Activated CD4-positive, alpha-beta memory T cell treated with anti-CD3 and anti-CD28 coated beads for 36 hours (primary cell): ENCODE measurements at regions of chr1 and their contacts with region 1.

Region 1: DNA sequence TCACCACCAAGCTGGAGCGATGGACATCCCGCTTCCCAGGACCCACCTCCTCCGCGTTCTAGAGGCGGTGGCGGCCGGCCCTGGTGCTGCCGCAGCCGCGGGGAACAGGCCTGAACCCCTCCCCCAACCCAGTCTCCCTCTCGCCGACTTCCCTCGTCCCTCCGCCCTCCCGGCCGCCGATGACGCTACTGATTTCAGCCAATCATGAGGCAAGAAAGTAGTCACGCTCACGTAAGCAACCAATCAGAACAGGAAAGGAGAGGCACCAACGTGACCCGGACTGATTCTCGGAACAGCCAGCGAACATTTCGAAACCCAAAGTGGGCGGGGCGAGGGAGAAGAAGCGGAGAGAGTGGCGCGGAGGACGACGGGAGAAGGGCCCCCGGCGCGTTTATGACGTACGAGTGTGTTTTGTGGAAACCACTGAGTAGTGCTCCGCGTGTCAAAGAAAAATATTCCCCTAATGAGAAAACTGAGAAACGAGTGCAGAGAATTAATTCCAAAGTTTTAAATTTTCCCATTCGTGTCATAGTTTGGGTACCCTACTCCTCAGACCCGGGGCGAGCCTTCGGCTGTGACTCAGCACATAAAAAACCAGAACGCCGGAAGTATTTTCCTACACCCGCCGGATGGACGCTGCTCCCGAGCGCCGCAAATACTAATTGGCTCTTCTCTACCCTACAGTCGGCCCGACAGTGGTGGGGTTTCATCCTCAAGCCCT is at the start of gene NRDC:
- DNase-seq: peak; percentile 100
- H3K4me3 Mint-ChIP-seq: no peak within 1 kb of the TSS
- H3K27ac Mint-ChIP-seq: no peak within 1 kb of the TSS
- H3K4me1 Mint-ChIP-seq: peaks cover 33% of the 10 kb centered on the region
- H3K27me3 Mint-ChIP-seq: peaks cover 6% of the 10 kb centered on the region
- total RNA-seq, gene NRDC: 153 to 155 TPM

Region 2: GRCh38 chr1:51616901-51617708 is 261.7 kb before region 1 on chr1 and contains the start of gene OSBPL9:
- CTCF ChIA-PET with region 1: no interaction called
- POLR2A ChIA-PET with region 1: no interaction called
- intact Hi-C with region 1: loop called (anchors 1 kb)
- DNase-seq: peak; percentile 94
- H3K4me3 Mint-ChIP-seq: peak within 1 kb of the TSS; percentile 99
- H3K27ac Mint-ChIP-seq: peak within 1 kb of the TSS; percentile 80
- H3K4me1 Mint-ChIP-seq: peaks cover 32% of the 10 kb centered on the region
- H3K27me3 Mint-ChIP-seq: no peaks in the 10 kb centered on the region
- total RNA-seq, gene OSBPL9: 46.1 to 48.6 TPM

Region 3: DNA sequence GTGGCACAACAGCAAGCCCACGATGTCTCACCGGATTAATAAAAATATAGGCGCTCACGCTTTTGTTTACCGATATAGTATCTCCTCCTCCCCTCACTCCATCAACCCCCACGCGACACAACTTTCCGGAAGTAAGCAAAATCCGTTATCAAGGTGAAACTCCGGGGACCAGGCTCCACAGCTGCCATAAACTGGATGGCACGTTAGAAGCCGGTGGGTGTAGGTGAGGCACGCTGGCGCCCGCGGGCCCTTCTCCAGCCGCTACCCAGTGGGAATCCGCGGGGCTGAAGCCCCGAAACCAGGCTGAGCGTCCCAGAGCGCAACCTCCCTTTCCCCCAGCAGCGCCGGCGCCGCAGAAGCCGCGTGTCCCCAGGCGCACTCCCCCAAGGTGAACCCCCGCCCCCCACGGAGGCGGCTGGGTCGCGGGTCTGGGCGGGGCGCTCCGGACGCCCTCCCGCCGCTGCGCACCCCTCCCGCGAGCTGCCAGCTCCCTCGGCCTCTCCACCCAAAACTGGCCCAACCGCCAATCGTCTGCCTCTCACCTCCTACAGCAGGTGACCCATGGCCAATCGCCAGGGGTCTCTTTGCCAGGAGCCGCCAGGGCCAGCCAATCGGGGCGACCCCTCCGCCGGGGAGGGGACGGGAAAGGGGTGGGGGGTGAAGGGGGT is 149.5 kb before region 1 on chr1:
- CTCF ChIA-PET with region 1: no interaction called
- POLR2A ChIA-PET with region 1: no interaction called
- intact Hi-C with region 1: loop called (anchors 2 kb)
- DNase-seq: peak; percentile 97
- H3K4me3 Mint-ChIP-seq: peak overlapping the region; percentile 87
- H3K27ac Mint-ChIP-seq: peak overlapping the region; percentile 80
- H3K4me1 Mint-ChIP-seq: peaks cover 39% of the 10 kb centered on the region
- H3K27me3 Mint-ChIP-seq: no peaks in the 10 kb centered on the region

Region 4: DNA sequence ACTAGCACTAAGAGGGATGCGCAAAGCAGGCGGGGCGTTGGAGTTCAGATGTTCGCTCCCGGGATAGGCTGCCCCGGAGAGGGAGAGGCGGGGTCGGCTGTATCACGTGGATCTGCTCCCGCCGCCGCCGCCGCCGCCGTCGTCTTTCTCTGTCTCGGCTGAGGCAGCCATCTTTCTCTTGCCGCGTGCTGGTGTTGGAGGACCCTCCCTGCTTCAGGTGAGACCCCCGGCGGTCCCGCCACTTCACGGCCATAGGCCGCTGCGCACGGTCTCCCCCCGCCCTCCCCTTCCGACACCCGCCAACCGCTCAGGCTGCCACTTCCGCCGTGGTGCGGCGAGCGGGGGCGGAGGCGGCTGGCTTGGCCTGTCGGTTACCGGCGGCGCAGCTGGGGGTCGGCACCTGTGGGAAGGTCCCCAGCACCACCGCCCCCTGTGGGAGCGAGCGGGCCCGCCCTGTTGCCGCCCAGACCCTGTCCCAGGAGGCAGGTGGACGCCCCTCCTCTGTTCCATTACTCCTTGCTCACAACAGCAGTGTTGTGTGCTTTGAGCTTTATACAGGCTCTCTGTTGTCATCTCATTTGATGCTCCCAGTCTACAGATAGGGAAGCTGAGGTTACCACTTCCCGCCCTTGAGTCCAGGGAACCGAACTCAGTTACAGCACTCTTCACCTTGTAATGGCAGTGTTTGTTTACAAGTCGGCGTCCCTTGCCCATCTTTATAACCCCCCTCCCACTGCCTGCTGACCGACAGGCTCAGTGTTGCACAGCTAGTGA is 177.6 kb after region 1 on chr1 and contains the start of gene BTF3L4:
- CTCF ChIA-PET with region 1: interaction called, 3 read pairs
- POLR2A ChIA-PET with region 1: no interaction called
- intact Hi-C with region 1: loop called (anchors 1 kb)
- DNase-seq: peak; percentile 97
- H3K4me3 Mint-ChIP-seq: peak within 1 kb of the TSS; percentile 94
- H3K27ac Mint-ChIP-seq: peak within 1 kb of the TSS; percentile 98
- H3K4me1 Mint-ChIP-seq: peaks cover 53% of the 10 kb centered on the region
- H3K27me3 Mint-ChIP-seq: no peaks in the 10 kb centered on the region
- total RNA-seq, gene BTF3L4: 32.5 to 35.2 TPM

Region 5: GRCh38 chr1:52080014-52080415 is 201.2 kb after region 1 on chr1:
- CTCF ChIA-PET with region 1: no interaction called
- POLR2A ChIA-PET with region 1: no interaction called
- intact Hi-C with region 1: no loop called
- DNase-seq: no peak
- H3K4me3 Mint-ChIP-seq: no peak overlapping the region
- H3K27ac Mint-ChIP-seq: no peak overlapping the region
- H3K4me1 Mint-ChIP-seq: peaks cover 5% of the 10 kb centered on the region
- H3K27me3 Mint-ChIP-seq: no peaks in the 10 kb centered on the region